ENCODE measurements at regions of chr12 and their contacts with region 1.

Region 1: GRCh38 chr12:19553175-19553574 is 113.9 kb downstream of the AEBP2 start:
- DNase-seq: no peak
- ATAC-seq: no peak
- H3K4me3 Mint-ChIP-seq: peak overlapping the region; percentile 52
- H3K27ac Mint-ChIP-seq: no peak overlapping the region
- H3K4me1 Mint-ChIP-seq: peaks cover 16% of the 10 kb centered on the region
- H3K27me3 Mint-ChIP-seq: no peaks in the 10 kb centered on the region

Region 2: GRCh38 chr12:18872770-18873169 is 680.4 kb before region 1 on chr12:
- CTCF ChIA-PET with region 1: no interaction called
- POLR2A ChIA-PET with region 1: no interaction called
- intact Hi-C with region 1: loop called in 1 of 2 experiments (anchors 5 kb)
- DNase-seq: no peak
- ATAC-seq: peak; percentile 55
- H3K4me3 Mint-ChIP-seq: peak overlapping the region; percentile 31
- H3K27ac Mint-ChIP-seq: peak overlapping the region; percentile 49
- H3K4me1 Mint-ChIP-seq: peaks cover 19% of the 10 kb centered on the region
- H3K27me3 Mint-ChIP-seq: peaks cover 2% of the 10 kb centered on the region

Region 3: GRCh38 chr12:19129486-19130223 is 423.5 kb before region 1 on chr12 and contains the start of gene PLEKHA5:
- CTCF ChIA-PET with region 1: no interaction called
- POLR2A ChIA-PET with region 1: no interaction called
- intact Hi-C with region 1: loop called in 1 of 2 experiments (anchors 5 kb)
- DNase-seq: peak; percentile 70
- ATAC-seq: peak; percentile 69
- H3K4me3 Mint-ChIP-seq: peak within 1 kb of the TSS; percentile 85
- H3K27ac Mint-ChIP-seq: peak within 1 kb of the TSS; percentile 34
- H3K4me1 Mint-ChIP-seq: peaks cover 18% of the 10 kb centered on the region
- H3K27me3 Mint-ChIP-seq: peaks cover 15% of the 10 kb centered on the region
- total RNA-seq, gene PLEKHA5: 4.5 to 5.7 TPM

Region 4: GRCh38 chr12:19369691-19370148 is 183.5 kb before region 1 on chr12:
- CTCF ChIA-PET with region 1: no interaction called
- POLR2A ChIA-PET with region 1: no interaction called
- intact Hi-C with region 1: no loop called
- DNase-seq: no peak
- ATAC-seq: no peak
- H3K4me3 Mint-ChIP-seq: no peak overlapping the region
- H3K27ac Mint-ChIP-seq: no peak overlapping the region
- H3K4me1 Mint-ChIP-seq: no peaks in the 10 kb centered on the region
- H3K27me3 Mint-ChIP-seq: no peaks in the 10 kb centered on the region

Region 5: DNA sequence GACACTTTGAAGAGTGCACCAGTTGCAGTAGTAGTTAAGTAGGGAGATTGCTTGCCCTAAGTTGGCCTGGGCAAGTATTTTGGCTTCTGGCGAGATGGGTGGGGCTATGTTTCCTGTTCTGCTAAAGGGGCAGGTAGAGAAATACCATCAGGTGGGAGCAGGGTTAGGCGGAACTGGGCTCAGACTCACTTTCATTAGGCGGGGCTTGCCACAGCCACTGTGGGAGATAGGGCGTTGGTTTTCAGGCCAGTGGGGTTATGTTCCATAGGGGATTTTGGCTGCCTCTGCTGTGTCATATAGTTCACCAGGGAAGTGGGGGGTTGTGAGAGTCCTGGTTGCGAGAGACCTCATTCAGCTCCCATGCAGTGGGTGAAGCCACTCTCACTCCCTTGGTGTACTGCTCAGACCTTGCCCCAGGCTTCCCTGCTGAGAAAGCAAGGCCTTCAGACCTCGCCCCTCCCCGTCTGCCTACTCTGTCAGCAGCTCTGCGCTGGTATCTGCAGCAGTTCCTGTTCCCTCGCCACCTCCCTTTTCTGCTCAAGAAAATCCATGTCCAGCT is 70.5 kb before region 1 on chr12:
- CTCF ChIA-PET with region 1: no interaction called
- POLR2A ChIA-PET with region 1: no interaction called
- intact Hi-C with region 1: no loop called
- DNase-seq: peak; percentile 78
- ATAC-seq: peak; percentile 90
- H3K4me3 Mint-ChIP-seq: peak overlapping the region; percentile 14
- H3K27ac Mint-ChIP-seq: peak overlapping the region; percentile 83
- H3K4me1 Mint-ChIP-seq: peaks cover 58% of the 10 kb centered on the region
- H3K27me3 Mint-ChIP-seq: no peaks in the 10 kb centered on the region

Region 6: GRCh38 chr12:19542618-19543017 is 10.6 kb before region 1 on chr12:
- CTCF ChIA-PET with region 1: no interaction called
- POLR2A ChIA-PET with region 1: no interaction called
- intact Hi-C with region 1: no loop called
- DNase-seq: no peak
- ATAC-seq: no peak
- H3K4me3 Mint-ChIP-seq: no peak overlapping the region
- H3K27ac Mint-ChIP-seq: no peak overlapping the region
- H3K4me1 Mint-ChIP-seq: peaks cover 2% of the 10 kb centered on the region
- H3K27me3 Mint-ChIP-seq: no peaks in the 10 kb centered on the region

Region 7: DNA sequence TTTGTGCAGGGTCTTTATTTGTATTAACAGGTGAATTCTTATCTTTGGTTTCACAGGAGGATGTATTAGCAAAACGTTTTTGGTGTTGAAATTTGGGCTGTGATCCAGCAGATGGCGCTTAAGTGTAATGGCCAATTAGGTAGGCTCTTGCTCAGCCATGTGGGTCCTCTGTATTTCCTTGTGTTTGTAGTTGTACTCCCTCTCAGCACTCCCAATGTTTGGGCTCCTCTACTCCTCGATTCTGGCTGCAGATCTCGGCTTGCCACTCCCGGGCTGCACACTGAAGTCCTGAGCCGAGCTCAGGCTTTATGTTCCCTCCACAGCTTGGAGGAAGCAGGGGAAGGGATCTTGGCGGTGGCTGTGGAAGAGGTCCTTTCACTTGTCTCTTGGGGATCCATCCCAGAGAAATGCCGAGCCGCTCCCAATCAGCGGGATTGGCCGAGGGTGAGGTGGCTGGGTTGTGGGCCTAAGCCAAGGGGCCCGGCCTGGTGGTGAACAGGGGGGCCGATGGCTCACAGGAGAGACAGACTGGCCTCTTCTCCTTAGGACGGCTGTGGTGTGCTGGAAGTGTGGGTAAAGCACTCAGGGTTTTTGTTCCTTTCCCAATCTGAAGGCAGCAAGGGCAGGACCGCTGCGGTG is 19.9 kb after region 1 on chr12:
- CTCF ChIA-PET with region 1: no interaction called
- POLR2A ChIA-PET with region 1: no interaction called
- intact Hi-C with region 1: no loop called
- DNase-seq: peak; percentile 60
- ATAC-seq: no peak
- H3K4me3 Mint-ChIP-seq: no peak overlapping the region
- H3K27ac Mint-ChIP-seq: no peak overlapping the region
- H3K4me1 Mint-ChIP-seq: no peaks in the 10 kb centered on the region
- H3K27me3 Mint-ChIP-seq: no peaks in the 10 kb centered on the region

Region 8: GRCh38 chr12:19683178-19683927 is 130.2 kb after region 1 on chr12:
- CTCF ChIA-PET with region 1: no interaction called
- POLR2A ChIA-PET with region 1: no interaction called
- intact Hi-C with region 1: loop called in 1 of 2 experiments (anchors 2 kb)
- DNase-seq: no peak
- ATAC-seq: no peak
- H3K4me3 Mint-ChIP-seq: no peak overlapping the region
- H3K27ac Mint-ChIP-seq: no peak overlapping the region
- H3K4me1 Mint-ChIP-seq: peaks cover 18% of the 10 kb centered on the region
- H3K27me3 Mint-ChIP-seq: no peaks in the 10 kb centered on the region

Measured in activated CD4-positive, alpha-beta T cell treated with anti-CD3 and anti-CD28 coated beads for 36 hours (primary cell).